ENCODE measurements at regions of chr10 and their contacts with region 1.

Region 1: GRCh38 chr10:18140149-18140956 is at the start of gene CACNB2:
- DNase-seq: peak; percentile 54 to 80
- H3K4me3 ChIP-seq: peak within 1 kb of the TSS; percentile 60
- H3K4me1 ChIP-seq: peaks cover 38% of the 10 kb centered on the region
- H3K27me3 ChIP-seq: no peaks in the 10 kb centered on the region

Region 2: GRCh38 chr10:17617031-17617911 is 523.1 kb before region 1 on chr10 and contains the start of gene HACD1:
- in situ Hi-C with region 1: loop called (anchors 25 kb)
- DNase-seq: peak; percentile 77 to 90
- H3K4me3 ChIP-seq: peak within 1 kb of the TSS; percentile 70
- H3K4me1 ChIP-seq: peaks cover 2% of the 10 kb centered on the region; the same call in 1 of the 2 replicates
- H3K27me3 ChIP-seq: no peaks in the 10 kb centered on the region

Region 3: DNA sequence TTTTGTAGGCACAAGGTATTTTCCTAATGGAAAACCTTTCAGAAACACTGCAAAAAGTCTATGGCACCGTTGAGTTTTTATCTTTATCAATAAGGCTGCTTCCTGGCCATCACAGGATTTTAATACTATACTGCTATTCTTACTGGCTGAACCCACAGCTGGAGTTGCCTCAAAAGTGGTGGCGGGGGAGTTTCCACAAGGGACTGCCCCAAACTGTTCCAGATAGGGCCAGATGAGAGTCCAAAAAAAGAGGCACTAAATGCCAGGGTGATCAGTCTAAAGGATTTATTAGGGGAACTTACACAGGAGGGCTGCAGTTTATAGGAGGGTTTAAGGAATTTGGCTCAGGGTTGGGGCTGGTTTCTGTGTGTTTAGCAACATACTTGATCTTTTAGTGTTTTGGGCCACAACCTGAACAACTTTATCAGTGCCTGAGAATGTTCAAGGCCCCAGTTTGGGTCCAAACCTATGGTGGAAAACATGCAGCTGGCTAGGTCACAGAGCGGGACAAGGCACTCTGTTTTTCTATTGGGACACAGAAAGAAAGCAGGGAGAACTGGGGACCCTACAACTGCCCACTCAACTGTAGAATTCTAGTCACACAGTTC is 455.0 kb before region 1 on chr10:
- in situ Hi-C with region 1: no loop called
- DNase-seq: no peak
- H3K4me3 ChIP-seq: no peak overlapping the region
- H3K4me1 ChIP-seq: no peaks in the 10 kb centered on the region
- H3K27me3 ChIP-seq: no peaks in the 10 kb centered on the region

Region 4: DNA sequence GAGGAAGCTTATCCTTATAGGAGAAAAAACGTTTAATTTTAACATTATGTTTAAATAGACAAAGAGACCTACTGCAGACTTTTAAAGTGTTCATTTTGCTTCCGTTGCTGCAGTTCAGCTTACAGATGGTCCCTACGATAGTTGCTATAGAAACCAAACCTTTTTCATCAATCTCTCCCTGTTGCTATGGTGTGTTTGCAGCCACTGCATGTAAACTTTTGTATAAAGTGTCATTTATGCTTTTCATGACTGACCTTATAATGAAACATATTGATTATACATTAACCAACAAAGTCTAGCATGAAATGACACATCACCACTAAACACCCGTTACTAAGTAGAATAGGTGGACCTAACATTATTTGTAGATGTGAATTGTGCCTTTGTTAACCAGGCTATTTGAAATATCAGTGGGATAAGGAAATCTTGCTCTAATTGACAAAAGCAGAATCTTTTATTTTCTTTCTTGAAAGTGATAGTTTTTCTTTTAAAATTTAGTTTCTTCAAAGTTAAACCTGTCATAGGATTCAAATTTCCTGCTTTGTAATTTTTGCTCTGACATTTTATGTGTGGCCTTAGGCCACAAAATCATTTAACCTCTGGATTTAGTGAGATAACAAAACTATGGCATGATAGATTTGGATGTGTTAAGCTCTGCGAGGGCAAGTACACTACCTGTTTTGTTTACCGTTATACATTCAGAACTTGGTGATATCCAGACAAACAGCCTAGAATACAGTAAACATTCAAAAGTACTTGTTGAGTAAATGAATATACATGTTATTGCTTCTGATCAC is 63.9 kb after region 1 on chr10:
- in situ Hi-C with region 1: loop called (anchors 5 kb)
- DNase-seq: peak in 1 of 2 experiments; percentile 78
- H3K4me3 ChIP-seq: no peak overlapping the region
- H3K4me1 ChIP-seq: peaks cover 34% of the 10 kb centered on the region
- H3K27me3 ChIP-seq: no peaks in the 10 kb centered on the region